ENCODE measurements at regions of chrX and their contacts with region 1.

Region 1: DNA sequence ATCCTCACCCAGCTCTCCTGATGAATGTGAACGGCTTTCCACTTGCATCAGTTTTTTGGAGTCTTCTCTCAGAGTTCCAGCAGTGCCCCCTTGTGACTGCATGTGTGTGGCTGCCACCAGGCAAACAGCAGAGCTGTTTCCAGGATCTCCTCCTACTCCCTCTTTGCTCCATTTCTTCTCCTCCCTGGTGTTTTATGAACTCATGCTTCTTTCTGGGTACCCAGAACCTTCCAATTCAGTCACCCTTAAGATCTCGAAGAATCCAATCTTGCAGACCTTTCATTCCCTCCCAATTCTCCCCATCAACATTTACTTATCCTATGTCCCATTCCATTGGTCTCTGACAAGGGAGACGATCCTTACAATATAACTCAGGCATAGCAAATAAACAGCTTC is 6.8 kb upstream of the TCEANC start:
- DNase-seq: peak in 2 of 4 donors; percentile 47 to 67
- ATAC-seq: peak; percentile 88
- H3K4me3 ChIP-seq: no peak overlapping the region
- H3K27ac ChIP-seq: no peak overlapping the region
- H3K4me1 ChIP-seq: no peaks in the 10 kb centered on the region
- H3K27me3 ChIP-seq: peaks cover 0 to 7% of the 10 kb centered on the region in 2 donors
- CTCF ChIP-seq: peak; percentile 41 to 49

Region 2: GRCh38 chrX:13515211-13515930 is 130.8 kb before region 1 on chrX:
- intact Hi-C with region 1: loop called in 1 of 2 experiments (anchors 10 kb)
- DNase-seq: no peak
- ATAC-seq: no peak
- H3K4me3 ChIP-seq: no peak overlapping the region
- H3K27ac ChIP-seq: no peak overlapping the region
- H3K4me1 ChIP-seq: no peaks in the 10 kb centered on the region
- H3K27me3 ChIP-seq: no peaks in the 10 kb centered on the region
- CTCF ChIP-seq: no peak